Posterior cingulate gyrus (tissue), 11 donors: ENCODE measurements at regions of chr20 and their contacts with region 1.

Region 1: DNA sequence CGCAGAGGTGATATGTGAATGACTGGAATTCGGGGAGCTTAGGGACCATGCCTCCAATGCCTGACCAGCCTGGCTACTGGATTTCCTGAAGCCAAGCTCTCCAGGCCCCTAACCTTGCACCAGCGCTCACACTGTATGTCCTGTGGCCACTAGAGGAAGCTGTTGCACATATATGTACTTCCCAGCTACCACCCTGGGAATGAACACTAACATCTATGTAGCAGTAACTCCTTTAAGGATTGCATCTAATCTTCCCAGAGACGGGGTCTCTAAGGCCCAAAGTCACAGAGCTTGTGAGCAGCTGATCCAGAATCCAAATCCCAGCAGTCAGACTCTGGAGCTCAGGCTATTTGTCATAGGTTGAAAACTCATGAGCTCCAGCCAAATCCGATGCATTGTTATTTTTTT is 20.4 kb upstream of the BPIFB1 start:
- DNase-seq: peak in 6 of 10 donors; percentile 44 to 92 (median 54)

Region 2: GRCh38 chr20:33162753-33163152 is 99.9 kb before region 1 on chr20:
- intact Hi-C with region 1: no loop called
- DNase-seq: no peak

Region 3: GRCh38 chr20:33299111-33299603 is 36.5 kb after region 1 on chr20:
- intact Hi-C with region 1: loop called (anchors 5 kb)
- DNase-seq: peak; percentile 41 to 96 (median 78)

Region 4: GRCh38 chr20:33337531-33338165 is 75.0 kb after region 1 on chr20:
- intact Hi-C with region 1: no loop called
- DNase-seq: peak in 1 of 10 donors; percentile 39